Ovary (tissue), 10 donors: ENCODE measurements at regions of chr1 and their contacts with region 1.

Region 1: DNA sequence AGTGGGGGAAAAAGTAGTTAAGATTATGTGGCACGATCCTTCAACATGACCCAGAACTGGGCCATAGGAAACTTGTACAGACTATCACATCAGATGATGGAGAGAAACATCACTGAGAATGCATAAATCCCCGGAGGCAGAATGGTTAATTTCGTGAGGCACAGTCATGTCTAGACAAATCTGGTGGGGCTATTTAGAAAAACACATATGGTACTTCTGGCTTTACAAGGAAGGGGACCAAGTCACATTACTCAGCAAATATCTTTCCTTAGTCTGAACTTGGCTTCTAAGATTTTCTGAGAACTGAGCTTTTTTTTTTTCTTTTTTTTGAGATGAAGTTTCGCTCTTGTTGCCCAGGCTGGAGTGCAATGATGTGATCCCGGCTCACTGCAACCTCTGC is 9.2 kb upstream of the UQCRHL start:
- DNase-seq: no peak
- H3K4me3 ChIP-seq: no peak overlapping the region
- H3K27ac ChIP-seq: no peak overlapping the region
- H3K4me1 ChIP-seq: no peaks in the 10 kb centered on the region
- H3K27me3 ChIP-seq: no peaks in the 10 kb centered on the region
- CTCF ChIP-seq: no peak
- EP300 ChIP-seq: no peak
- POLR2A ChIP-seq: no peak

Region 2: GRCh38 chr1:15994590-15995351 is 178.1 kb after region 1 on chr1:
- intact Hi-C with region 1: loop called in 1 of 4 experiments (anchors 5 kb)
- DNase-seq: peak; percentile 57 to 71 (median 68)
- H3K4me3 ChIP-seq: no peak overlapping the region
- H3K27ac ChIP-seq: no peak overlapping the region
- H3K4me1 ChIP-seq: no peaks in the 10 kb centered on the region
- H3K27me3 ChIP-seq: no peaks in the 10 kb centered on the region
- CTCF ChIP-seq: peak; percentile 23 to 88 (median 80)
- EP300 ChIP-seq: no peak
- POLR2A ChIP-seq: no peak